ENCODE measurements at regions of chr7 and their contacts with region 1.

Region 1: DNA sequence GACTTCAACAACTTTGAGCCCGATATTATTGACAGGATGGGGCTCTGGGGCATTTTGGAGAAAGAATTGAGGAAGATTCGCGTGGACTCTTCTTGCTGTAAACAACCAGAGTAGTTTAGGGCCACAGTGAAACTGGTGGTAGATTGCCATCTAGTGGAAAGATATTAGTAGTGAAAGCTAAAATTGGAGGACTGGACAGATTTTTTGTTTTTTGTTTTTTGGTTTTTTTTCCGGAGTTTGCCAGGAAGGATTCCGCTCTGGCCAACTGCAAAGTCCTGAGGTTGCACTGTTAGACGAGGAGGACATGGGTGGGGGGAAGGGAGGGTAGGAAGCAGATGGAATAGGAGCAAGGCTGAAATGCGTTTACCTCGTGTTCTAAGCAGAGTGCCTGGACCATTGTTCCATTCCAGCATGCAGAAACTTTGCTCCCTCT is 11.7 kb downstream of the NOBOX start:
- DNase-seq: no peak
- H3K4me3 ChIP-seq: peak overlapping the region in 1 of 4 donors; percentile 29
- H3K27ac ChIP-seq: no peak overlapping the region
- H3K4me1 ChIP-seq: peaks cover 0 to 16% (median 6%) of the 10 kb centered on the region in 4 donors
- H3K27me3 ChIP-seq: no peaks in the 10 kb centered on the region
- CTCF ChIP-seq: peak; percentile 71 to 85 (median 77)
- EP300 ChIP-seq: no peak
- POLR2A ChIP-seq: no peak

Region 2: DNA sequence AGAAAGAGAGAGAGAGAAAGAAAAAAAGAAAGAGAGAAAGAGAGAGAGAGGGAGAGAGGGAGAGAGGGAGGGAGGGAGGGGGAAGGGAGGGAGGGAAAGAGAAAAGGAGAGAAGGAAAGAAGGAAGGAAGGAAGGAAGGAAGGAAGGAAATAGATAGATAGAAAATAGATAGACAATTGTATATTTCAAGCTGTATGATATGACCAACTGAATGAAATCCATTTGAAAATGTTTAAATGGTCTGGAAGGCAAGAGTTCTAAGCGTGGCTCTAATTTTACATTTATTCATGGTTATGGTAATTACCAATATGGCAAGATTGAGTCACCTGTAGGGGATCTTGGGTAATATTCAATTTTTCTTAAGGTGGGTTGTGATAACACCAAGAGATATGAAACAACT is 233.0 kb before region 1 on chr7:
- in situ Hi-C with region 1: loop called in 1 of 4 experiments (anchors 25 kb)
- intact Hi-C with region 1: no loop called
- DNase-seq: no peak
- H3K4me3 ChIP-seq: no peak overlapping the region
- H3K27ac ChIP-seq: no peak overlapping the region
- H3K4me1 ChIP-seq: no peaks in the 10 kb centered on the region
- H3K27me3 ChIP-seq: no peaks in the 10 kb centered on the region
- CTCF ChIP-seq: no peak
- EP300 ChIP-seq: no peak
- POLR2A ChIP-seq: no peak

Region 3: DNA sequence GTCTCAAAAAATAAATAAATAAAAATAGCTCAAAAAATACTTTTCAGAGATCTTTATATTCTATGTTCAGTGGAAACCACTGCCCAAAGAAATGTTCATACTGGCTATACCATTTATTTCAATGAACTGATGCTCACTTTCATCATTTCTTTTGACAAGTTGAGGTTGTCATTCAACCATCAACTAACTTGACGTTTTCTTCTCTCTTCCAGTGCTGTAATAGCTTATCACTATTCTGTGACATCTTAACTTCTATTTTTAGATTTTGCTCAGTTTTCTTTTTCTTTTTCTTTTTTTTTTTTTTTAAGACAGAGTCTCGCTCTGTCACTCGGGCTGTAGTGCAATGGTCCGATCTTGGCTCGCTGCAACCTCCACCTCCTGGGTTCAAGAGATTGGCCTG is 217.2 kb before region 1 on chr7:
- in situ Hi-C with region 1: loop called in 3 of 4 experiments (anchors 5 to 25 kb)
- intact Hi-C with region 1: no loop called
- DNase-seq: no peak
- H3K4me3 ChIP-seq: no peak overlapping the region
- H3K27ac ChIP-seq: no peak overlapping the region
- H3K4me1 ChIP-seq: no peaks in the 10 kb centered on the region
- H3K27me3 ChIP-seq: no peaks in the 10 kb centered on the region
- CTCF ChIP-seq: no peak
- EP300 ChIP-seq: no peak
- POLR2A ChIP-seq: no peak